ENCODE measurements at regions of chr4 and their contacts with region 1.

Region 1: DNA sequence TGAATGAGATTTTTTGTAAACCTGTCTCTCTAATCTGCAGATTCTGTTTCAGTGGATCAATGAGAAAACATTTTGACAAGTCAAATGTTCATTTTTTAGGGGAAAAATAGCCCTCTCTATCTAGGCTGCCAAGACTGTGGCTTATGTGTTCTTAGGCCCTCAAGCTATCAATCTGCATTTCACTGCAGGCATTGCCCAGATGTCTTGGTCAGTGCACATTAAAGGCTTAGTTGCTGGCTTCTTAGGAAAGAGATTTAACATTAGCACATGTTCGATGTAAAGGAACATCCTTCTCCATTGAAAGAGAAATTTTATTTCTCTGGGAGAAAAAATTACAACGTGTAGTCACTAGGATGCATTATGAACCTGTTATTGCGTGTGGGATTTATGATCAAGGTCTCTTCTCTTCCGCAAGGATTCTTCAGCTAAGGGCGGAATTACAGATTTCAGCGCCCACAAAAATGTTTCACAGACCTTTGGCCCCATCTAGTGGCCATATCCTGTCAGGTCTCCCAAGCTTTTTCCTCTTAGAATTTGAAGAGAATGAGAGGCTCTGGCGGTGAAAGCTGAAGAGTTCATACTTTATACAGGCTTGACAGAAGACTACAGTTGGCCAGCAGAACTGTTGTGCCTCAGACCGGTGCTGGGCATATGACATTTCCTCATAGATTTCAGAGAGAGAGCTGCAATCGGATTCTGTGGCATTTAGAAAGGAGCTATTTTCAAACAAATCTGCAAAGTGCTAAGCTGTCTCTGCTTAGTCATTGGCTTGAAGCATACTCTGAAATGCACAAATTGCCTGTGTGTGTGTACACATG is 144.6 kb upstream of the NOCT start:
- DNase-seq: no peak
- H3K4me3 ChIP-seq: no peak overlapping the region
- H3K27me3 ChIP-seq: peaks cover 18% of the 10 kb centered on the region
- CTCF ChIP-seq: peak; percentile 78

Region 2: DNA sequence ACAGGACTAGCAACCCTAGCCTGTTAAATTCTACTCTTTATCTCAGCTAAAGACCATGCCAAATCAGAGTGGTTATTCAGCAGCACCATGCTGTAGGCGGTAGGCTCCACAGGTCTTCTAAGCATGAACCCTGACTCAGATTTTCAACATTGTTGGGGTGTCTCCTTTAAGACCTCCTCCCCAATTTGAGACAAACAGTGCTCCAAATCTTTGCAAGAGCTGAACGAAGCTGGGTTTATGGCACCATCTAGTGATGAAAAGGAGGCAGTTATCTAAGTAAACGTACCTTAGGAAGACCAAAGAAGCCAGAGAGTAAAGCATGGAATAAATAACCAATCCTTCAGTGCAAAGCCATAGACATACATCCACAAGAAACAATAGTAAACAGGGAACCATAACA is 294.3 kb before region 1 on chr4:
- CTCF ChIA-PET with region 1: interaction called, 11 read pairs
- POLR2A ChIA-PET with region 1: no interaction called
- DNase-seq: no peak
- H3K4me3 ChIP-seq: no peak overlapping the region
- H3K27me3 ChIP-seq: no peaks in the 10 kb centered on the region; the same call in 1 of the 2 replicates
- CTCF ChIP-seq: peak; percentile 49

Region 3: GRCh38 chr4:138686106-138686835 is 184.7 kb before region 1 on chr4:
- CTCF ChIA-PET with region 1: interaction called, 32 read pairs
- POLR2A ChIA-PET with region 1: no interaction called
- DNase-seq: no peak
- H3K4me3 ChIP-seq: no peak overlapping the region
- H3K27me3 ChIP-seq: peaks cover 5% of the 10 kb centered on the region
- CTCF ChIP-seq: no peak

Region 4: DNA sequence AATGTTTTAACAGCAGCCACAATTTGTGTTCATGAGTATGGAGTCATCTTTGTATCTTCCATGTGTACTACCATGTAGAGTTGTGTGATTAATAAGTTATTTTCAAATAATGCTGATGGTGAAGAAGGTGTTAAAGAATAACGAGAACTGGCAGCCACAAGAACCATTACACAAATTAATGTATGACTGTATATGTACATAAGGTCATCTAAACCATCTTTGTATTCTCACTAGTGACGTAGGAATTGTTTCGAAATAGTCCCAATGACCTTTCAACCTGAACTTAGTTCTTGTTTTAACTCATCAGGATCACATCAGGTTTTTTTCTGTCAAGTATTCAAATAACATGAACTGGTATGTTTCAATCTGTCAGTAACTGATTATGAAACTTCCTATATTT is 96.4 kb after region 1 on chr4:
- CTCF ChIA-PET with region 1: no interaction called
- POLR2A ChIA-PET with region 1: no interaction called
- DNase-seq: no peak
- H3K4me3 ChIP-seq: no peak overlapping the region
- H3K27me3 ChIP-seq: no peaks in the 10 kb centered on the region
- CTCF ChIP-seq: no peak

Measured in BJ (cell line).